PC-9 (cell line): ENCODE measurements at regions of chr10 and their contacts with region 1.

Region 1: GRCh38 chr10:115844591-115844990 is 428.4 kb downstream of the GFRA1 start:
- DNase-seq: no peak
- H3K4me3 ChIP-seq: no peak overlapping the region
- H3K27ac ChIP-seq: no peak overlapping the region
- H3K4me1 ChIP-seq: no peaks in the 10 kb centered on the region
- H3K27me3 ChIP-seq: no peaks in the 10 kb centered on the region
- CTCF ChIP-seq: no peak

Region 2: DNA sequence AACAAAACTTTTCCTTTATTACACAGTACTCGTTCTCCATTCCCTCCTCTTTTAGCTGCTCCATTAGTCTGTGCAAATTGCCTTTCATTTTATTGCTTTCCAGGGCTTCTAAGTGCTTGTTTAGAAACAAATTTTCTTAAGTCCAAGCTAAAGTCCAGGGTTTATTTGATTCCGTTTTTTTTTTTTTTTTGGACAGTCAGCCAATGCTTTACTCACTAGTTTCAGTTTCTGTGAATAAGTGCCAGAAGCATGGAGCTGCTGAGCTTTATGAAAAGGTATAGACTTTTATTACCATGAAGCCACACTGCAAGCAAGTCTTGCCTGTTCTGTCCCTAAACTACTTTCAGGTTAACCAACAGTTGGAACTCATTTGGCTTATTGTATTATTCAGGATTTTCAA is 26.6 kb before region 1 on chr10:
- CTCF ChIA-PET with region 1: interaction called, 10 read pairs
- POLR2A ChIA-PET with region 1: no interaction called
- intact Hi-C with region 1: no loop called
- DNase-seq: no peak
- H3K4me3 ChIP-seq: no peak overlapping the region
- H3K27ac ChIP-seq: no peak overlapping the region
- H3K4me1 ChIP-seq: no peaks in the 10 kb centered on the region
- H3K27me3 ChIP-seq: no peaks in the 10 kb centered on the region
- CTCF ChIP-seq: no peak

Region 3: DNA sequence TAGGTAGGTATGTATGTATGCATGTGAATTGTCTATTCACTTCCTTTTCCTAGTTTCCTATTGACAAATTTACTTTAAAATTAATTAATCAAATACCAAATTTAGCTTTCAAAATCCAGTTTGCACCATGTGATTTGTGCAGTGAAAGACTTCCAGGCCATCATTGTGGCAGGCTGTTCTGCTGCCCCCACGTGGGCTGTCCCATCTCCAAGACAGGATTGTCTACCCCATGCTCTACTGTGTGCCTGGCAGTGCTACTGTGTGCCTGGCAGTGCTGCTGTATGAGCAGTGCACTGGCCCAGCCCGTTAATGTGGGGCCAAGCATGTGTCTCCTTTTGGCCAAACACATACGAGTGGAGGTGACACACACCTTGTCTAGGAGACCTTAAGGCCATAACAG is 53.7 kb after region 1 on chr10:
- CTCF ChIA-PET with region 1: no interaction called
- POLR2A ChIA-PET with region 1: no interaction called
- intact Hi-C with region 1: no loop called
- DNase-seq: no peak
- H3K4me3 ChIP-seq: no peak overlapping the region
- H3K27ac ChIP-seq: no peak overlapping the region
- H3K4me1 ChIP-seq: no peaks in the 10 kb centered on the region
- H3K27me3 ChIP-seq: peaks cover 17% of the 10 kb centered on the region; the same call in 1 of the 2 replicates
- CTCF ChIP-seq: no peak

Region 4: DNA sequence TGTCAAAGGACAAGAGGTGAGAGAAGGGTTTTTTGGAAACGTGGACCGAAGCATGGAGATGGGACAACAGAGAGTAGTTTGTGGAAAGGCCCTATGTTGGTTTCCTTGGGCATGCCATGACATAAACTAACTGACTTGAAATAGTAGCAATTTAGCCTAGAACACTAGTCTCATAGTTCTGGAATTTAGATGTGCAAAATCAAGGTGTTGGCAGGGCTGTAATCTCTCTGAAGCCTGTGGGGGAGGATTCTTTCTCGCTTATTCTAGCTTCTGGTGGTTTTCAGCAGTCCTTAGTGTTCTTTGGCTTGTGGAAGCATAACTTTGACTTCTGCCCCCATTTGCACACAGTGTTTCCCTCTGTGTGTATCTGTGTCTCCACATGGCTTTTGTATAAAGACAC is 145.0 kb after region 1 on chr10:
- CTCF ChIA-PET with region 1: no interaction called
- POLR2A ChIA-PET with region 1: no interaction called
- intact Hi-C with region 1: no loop called
- DNase-seq: no peak
- H3K4me3 ChIP-seq: no peak overlapping the region
- H3K27ac ChIP-seq: no peak overlapping the region
- H3K4me1 ChIP-seq: no peaks in the 10 kb centered on the region
- H3K27me3 ChIP-seq: no peaks in the 10 kb centered on the region
- CTCF ChIP-seq: no peak